ENCODE measurements at regions of chr12 and their contacts with region 1.

Region 1: GRCh38 chr12:81644503-81644902 is 114.6 kb downstream of the PPFIA2 start:
- DNase-seq: no peak
- ATAC-seq: no peak
- H3K4me3 ChIP-seq: no peak overlapping the region
- H3K27ac ChIP-seq: no peak overlapping the region
- H3K4me1 ChIP-seq: no peaks in the 10 kb centered on the region
- H3K27me3 ChIP-seq: no peaks in the 10 kb centered on the region
- CTCF ChIP-seq: peak; percentile 17; the same call in 1 of the 2 replicates

Region 2: DNA sequence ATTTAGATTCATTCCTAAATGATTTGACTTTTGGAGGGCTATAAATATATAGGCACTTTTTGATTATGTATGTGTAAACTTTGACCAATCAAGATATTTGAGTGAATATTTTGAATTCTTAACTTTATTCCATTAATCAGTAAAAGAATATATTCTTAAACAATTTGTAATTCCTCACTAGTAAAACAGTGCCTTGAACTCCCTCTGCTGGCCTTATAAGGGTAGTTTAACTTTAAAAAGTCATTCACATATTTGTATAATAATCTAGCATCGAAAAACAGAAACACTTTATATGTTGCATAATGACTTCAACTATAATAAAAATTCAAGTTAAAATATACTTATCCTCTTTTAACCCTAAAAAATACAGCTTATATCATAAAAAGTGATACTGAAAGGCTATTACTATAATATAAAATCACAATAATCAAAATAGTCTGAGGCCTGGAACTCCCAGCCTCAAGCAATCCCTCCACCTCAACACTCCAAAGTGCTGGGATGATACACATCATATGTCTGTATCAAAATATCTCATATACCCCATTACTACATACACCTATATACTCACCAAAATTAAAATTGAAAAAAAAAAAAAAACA is 682.5 kb after region 1 on chr12:
- CTCF ChIA-PET with region 1: no interaction called
- POLR2A ChIA-PET with region 1: no interaction called
- in situ Hi-C with region 1: no loop called
- intact Hi-C with region 1: loop called (anchors 1 kb)
- DNase-seq: no peak
- ATAC-seq: no peak
- H3K4me3 ChIP-seq: no peak overlapping the region
- H3K27ac ChIP-seq: no peak overlapping the region
- H3K4me1 ChIP-seq: 0 out of 2 replicates have a peak, but pooled peaks cover 3% of the 10 kb centered on the region
- H3K27me3 ChIP-seq: no peaks in the 10 kb centered on the region
- CTCF ChIP-seq: peak; percentile 27; the same call in 1 of the 2 replicates

Region 3: GRCh38 chr12:82358200-82359114 is 714.0 kb after region 1 on chr12 and contains the starts of genes CCDC59 and METTL25:
- CTCF ChIA-PET with region 1: interaction called, 3 read pairs
- POLR2A ChIA-PET with region 1: no interaction called
- in situ Hi-C with region 1: no loop called
- intact Hi-C with region 1: loop called (anchors 1 kb)
- DNase-seq: peak; percentile 82
- ATAC-seq: peak; percentile 98
- H3K4me3 ChIP-seq: peak within 1 kb of the TSS; percentile 99 to 100
- H3K27ac ChIP-seq: peak within 1 kb of the TSS; percentile 98
- H3K4me1 ChIP-seq: peaks cover 8% of the 10 kb centered on the region
- H3K27me3 ChIP-seq: no peaks in the 10 kb centered on the region
- CTCF ChIP-seq: peak; percentile 100
- total RNA-seq, gene CCDC59: 39.8 TPM
- total RNA-seq, gene METTL25: 3.5 TPM